ENCODE measurements at regions of chr2 and their contacts with region 1.

Region 1: DNA sequence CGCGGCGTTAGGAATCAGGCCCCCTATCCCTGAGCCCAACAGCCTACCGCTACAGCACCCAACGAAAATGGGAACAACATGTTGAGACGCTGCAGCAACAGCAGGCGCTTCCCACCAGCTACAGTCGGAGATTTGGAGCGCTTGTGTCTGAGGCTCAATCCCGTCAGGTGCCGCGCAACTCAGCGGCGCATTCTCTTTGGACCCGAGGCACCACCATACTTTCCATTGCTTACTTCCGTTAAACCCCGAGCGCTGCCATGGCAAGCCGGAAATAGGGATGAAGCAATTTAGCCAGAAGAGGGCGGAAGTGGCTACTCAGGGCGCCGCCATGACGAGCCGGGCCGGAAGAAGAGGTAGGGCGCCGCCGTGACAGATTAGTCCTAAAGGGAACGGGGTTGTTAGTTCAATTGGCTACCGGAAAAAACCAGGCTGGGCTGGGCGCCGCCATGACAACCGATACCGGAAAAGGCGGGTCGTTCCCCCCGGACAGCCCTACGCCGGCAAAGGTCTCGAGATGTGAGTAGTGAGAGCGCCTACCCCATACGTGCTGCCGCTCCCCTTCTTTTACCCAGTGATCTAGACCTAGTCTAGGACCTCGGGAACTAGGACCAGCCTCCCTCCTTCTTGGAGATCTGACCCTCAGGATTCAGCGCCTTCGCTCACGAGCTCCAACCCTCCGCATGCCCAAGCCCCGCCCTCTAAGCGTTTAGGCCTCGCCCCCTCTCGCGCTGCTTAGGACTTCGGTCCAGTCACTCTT is at the start of gene CHCHD5:
- DNase-seq: peak; percentile 72 to 95 (median 93)
- ATAC-seq: peak; percentile 94
- H3K4me3 ChIP-seq: peak within 1 kb of the TSS; percentile 76
- H3K4me3 Mint-ChIP-seq: peak within 1 kb of the TSS; percentile 91 to 98 (median 96)
- H3K27ac ChIP-seq: peak within 1 kb of the TSS; percentile 79
- H3K27ac Mint-ChIP-seq: peak within 1 kb of the TSS; percentile 93 to 99 (median 96)
- H3K4me1 ChIP-seq: peaks cover 11 to 15% of the 10 kb centered on the region in 2 donors
- H3K4me1 Mint-ChIP-seq: peaks cover 26 to 49% (median 38%) of the 10 kb centered on the region in 7 donors
- H3K27me3 ChIP-seq: no peaks in the 10 kb centered on the region
- H3K27me3 Mint-ChIP-seq: peaks cover 0 to 2% (median 0%) of the 10 kb centered on the region in 5 donors
- total RNA-seq, gene CHCHD5: 17.4 to 31.9 (median 21.1) TPM

Region 2: DNA sequence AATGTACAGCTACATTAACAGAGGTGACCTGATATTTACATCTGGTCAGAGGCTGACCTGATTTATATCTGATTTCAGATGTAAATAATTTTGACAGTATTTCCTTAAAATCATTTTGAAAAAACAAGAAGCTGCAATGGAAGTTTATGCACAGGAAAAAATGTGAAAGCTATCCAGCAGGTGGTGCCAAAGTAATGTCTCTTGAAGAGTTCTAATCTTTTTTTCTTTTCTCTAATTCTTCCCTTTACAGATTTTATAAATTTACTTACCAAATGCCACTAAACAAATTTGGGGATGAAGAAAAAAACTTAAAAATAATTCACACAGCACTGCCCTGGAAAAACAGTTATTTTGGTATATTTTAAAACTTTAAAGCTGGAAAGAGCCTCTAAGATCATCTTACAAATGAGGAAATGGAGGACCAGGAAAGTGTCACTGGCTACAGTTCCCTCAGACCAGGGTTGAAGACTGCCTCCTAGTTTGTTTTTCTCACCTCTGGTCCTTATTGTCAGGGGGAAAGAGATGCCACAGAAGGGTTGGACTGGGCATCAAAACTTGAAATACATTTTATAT is 462.5 kb before region 1 on chr2:
- CTCF ChIA-PET with region 1: no interaction called
- POLR2A ChIA-PET with region 1: no interaction called
- intact Hi-C with region 1: loop called (anchors 5 to 10 kb)
- DNase-seq: peak in 7 of 9 donors; percentile 33 to 68 (median 56)
- ATAC-seq: no peak
- H3K4me3 ChIP-seq: no peak overlapping the region
- H3K4me3 Mint-ChIP-seq: no peak overlapping the region
- H3K27ac ChIP-seq: no peak overlapping the region
- H3K27ac Mint-ChIP-seq: peak overlapping the region in 3 of 9 donors; percentile 40 to 62 (median 47)
- H3K4me1 ChIP-seq: no peaks in the 10 kb centered on the region
- H3K4me1 Mint-ChIP-seq: peaks cover 0 to 8% (median 0%) of the 10 kb centered on the region in 7 donors
- H3K27me3 ChIP-seq: no peaks in the 10 kb centered on the region
- H3K27me3 Mint-ChIP-seq: no peaks in the 10 kb centered on the region

Region 3: GRCh38 chr2:112259509-112260294 is 324.6 kb before region 1 on chr2:
- CTCF ChIA-PET with region 1: no interaction called
- POLR2A ChIA-PET with region 1: no interaction called
- intact Hi-C with region 1: loop called (anchors 2 kb)
- DNase-seq: peak; percentile 63 to 85 (median 79)
- ATAC-seq: peak; percentile 69
- H3K4me3 ChIP-seq: peak overlapping the region; percentile 36
- H3K4me3 Mint-ChIP-seq: peak overlapping the region; percentile 19 to 78 (median 70)
- H3K27ac ChIP-seq: no peak overlapping the region
- H3K27ac Mint-ChIP-seq: peak overlapping the region; percentile 16 to 91 (median 70)
- H3K4me1 ChIP-seq: peaks cover 0 to 6% of the 10 kb centered on the region in 2 donors
- H3K4me1 Mint-ChIP-seq: peaks cover 4 to 23% (median 7%) of the 10 kb centered on the region in 7 donors
- H3K27me3 ChIP-seq: no peaks in the 10 kb centered on the region
- H3K27me3 Mint-ChIP-seq: peaks cover 0 to 9% (median 5%) of the 10 kb centered on the region in 5 donors

Region 4: GRCh38 chr2:112542123-112542983 is 42.0 kb before region 1 on chr2 and contains the start of gene POLR1B:
- CTCF ChIA-PET with region 1: no interaction called
- POLR2A ChIA-PET with region 1: interaction called, 4 read pairs
- intact Hi-C with region 1: loop called (anchors 1 kb)
- DNase-seq: peak in 8 of 9 donors; percentile 57 to 81 (median 77)
- ATAC-seq: peak; percentile 88
- H3K4me3 ChIP-seq: peak within 1 kb of the TSS; percentile 95
- H3K4me3 Mint-ChIP-seq: no peak within 1 kb of the TSS
- H3K27ac ChIP-seq: peak within 1 kb of the TSS; percentile 89
- H3K27ac Mint-ChIP-seq: peak within 1 kb of the TSS in 1 of 9 donors; percentile 98
- H3K4me1 ChIP-seq: peaks cover 14 to 15% of the 10 kb centered on the region in 2 donors
- H3K4me1 Mint-ChIP-seq: peaks cover 12 to 24% (median 19%) of the 10 kb centered on the region in 7 donors
- H3K27me3 ChIP-seq: no peaks in the 10 kb centered on the region
- H3K27me3 Mint-ChIP-seq: no peaks in the 10 kb centered on the region
- total RNA-seq, gene POLR1B: 10.1 to 41.8 (median 25.2) TPM

Region 5: GRCh38 chr2:112692496-112692911 is 108.2 kb after region 1 on chr2:
- CTCF ChIA-PET with region 1: interaction called, 4 read pairs
- POLR2A ChIA-PET with region 1: no interaction called
- intact Hi-C with region 1: loop called in 1 of 2 experiments (anchors 1 kb)
- DNase-seq: peak in 3 of 9 donors; percentile 7 to 69 (median 16)
- ATAC-seq: peak; percentile 81
- H3K4me3 ChIP-seq: no peak overlapping the region
- H3K4me3 Mint-ChIP-seq: peak overlapping the region in 1 of 10 donors; percentile 78
- H3K27ac ChIP-seq: no peak overlapping the region
- H3K27ac Mint-ChIP-seq: peak overlapping the region in 6 of 9 donors; percentile 45 to 91 (median 56)
- H3K4me1 ChIP-seq: peaks cover 6 to 16% of the 10 kb centered on the region in 2 donors
- H3K4me1 Mint-ChIP-seq: peaks cover 0 to 38% (median 18%) of the 10 kb centered on the region in 7 donors
- H3K27me3 ChIP-seq: no peaks in the 10 kb centered on the region
- H3K27me3 Mint-ChIP-seq: no peaks in the 10 kb centered on the region

Region 6: GRCh38 chr2:112906276-112906675 is 322.0 kb after region 1 on chr2:
- CTCF ChIA-PET with region 1: no interaction called
- POLR2A ChIA-PET with region 1: no interaction called
- intact Hi-C with region 1: no loop called
- DNase-seq: no peak
- ATAC-seq: no peak
- H3K4me3 ChIP-seq: no peak overlapping the region
- H3K4me3 Mint-ChIP-seq: no peak overlapping the region
- H3K27ac ChIP-seq: no peak overlapping the region
- H3K27ac Mint-ChIP-seq: no peak overlapping the region
- H3K4me1 ChIP-seq: no peaks in the 10 kb centered on the region
- H3K4me1 Mint-ChIP-seq: peaks cover 0 to 8% (median 0%) of the 10 kb centered on the region in 7 donors
- H3K27me3 ChIP-seq: no peaks in the 10 kb centered on the region
- H3K27me3 Mint-ChIP-seq: peaks cover 0 to 10% (median 0%) of the 10 kb centered on the region in 5 donors